ENCODE measurements at regions of chr12 and their contacts with region 1.

Region 1: DNA sequence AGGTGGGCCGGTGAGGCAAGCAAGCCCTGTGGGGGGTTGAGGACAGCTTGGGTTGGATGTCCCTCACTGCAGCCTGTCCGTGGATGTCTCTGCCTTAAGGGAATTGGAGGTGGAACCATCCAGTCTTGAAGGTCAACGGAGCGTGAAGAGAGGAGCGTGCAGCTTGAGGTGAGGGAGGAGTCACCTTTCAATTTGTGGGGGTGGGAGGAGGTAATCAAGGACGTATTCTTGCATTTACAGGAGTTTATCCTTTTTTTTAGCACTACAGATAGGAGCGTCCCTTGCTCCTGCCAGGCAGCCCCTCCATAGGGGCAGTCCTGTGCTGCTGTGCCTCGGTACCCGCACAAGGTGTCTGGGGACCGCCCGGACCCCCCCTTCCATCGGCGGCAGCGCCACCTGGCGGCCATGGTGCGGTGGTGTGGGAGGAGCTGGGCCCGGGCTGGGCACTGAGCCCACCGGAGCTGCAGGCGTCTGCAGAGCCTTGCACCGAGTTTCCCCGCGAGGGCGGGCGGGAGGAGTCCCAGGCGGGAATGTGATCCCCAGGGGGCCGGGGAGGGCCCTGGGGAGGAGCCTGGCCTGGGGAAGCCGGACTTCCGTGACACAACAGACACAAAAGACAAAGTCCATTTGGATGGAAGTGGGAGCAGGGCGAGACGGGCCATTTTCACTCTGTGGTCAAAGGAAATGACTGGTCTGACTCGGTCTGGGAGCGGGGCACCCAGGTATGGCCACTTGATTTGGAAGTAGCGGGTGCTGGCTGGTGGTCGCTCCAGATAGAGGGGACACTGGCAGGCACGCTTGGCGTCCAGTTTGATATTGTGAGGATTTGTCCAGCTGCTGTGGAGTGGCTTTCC is 923 bp downstream of the DNAJC22 start:
- DNase-seq: peak; percentile 75
- ATAC-seq: peak; percentile 59
- H3K4me3 Mint-ChIP-seq: peak overlapping the region; percentile 65
- H3K27ac Mint-ChIP-seq: no peak overlapping the region
- H3K4me1 Mint-ChIP-seq: peaks cover 38% of the 10 kb centered on the region
- H3K27me3 Mint-ChIP-seq: peaks cover 62% of the 10 kb centered on the region
- CTCF ChIP-seq: peak; percentile 100

Region 2: GRCh38 chr12:49288412-49288853 is 59.2 kb before region 1 on chr12:
- CTCF ChIA-PET with region 1: interaction called, 145 read pairs
- POLR2A ChIA-PET with region 1: interaction called, 8 read pairs
- intact Hi-C with region 1: loop called (anchors 2 kb)
- DNase-seq: peak; percentile 81
- ATAC-seq: peak; percentile 69
- H3K4me3 Mint-ChIP-seq: no peak overlapping the region
- H3K27ac Mint-ChIP-seq: no peak overlapping the region
- H3K4me1 Mint-ChIP-seq: no peaks in the 10 kb centered on the region
- H3K27me3 Mint-ChIP-seq: peaks cover 22% of the 10 kb centered on the region
- CTCF ChIP-seq: peak; percentile 95

Region 3: DNA sequence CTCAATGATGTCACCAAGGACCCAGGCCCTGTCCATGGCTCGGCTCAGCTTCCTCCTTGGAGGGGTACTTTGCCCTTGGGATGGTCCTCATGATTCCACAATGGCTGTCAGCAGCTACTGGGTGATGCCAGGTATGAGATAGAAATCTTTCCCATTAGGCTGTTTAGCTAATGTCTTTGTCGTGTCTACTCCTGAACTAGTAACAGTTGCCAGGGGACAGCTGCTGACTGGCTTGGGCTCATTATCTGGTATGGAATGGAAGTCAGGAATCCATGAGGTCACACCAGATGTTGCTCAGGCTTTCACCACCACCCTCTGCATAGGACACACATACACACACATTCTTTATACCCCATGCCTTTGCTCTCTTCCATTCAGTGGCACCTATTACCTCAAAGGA is 43.5 kb before region 1 on chr12:
- CTCF ChIA-PET with region 1: interaction called, 20 read pairs
- POLR2A ChIA-PET with region 1: no interaction called
- intact Hi-C with region 1: no loop called
- DNase-seq: no peak
- ATAC-seq: no peak
- H3K4me3 Mint-ChIP-seq: no peak overlapping the region
- H3K27ac Mint-ChIP-seq: no peak overlapping the region
- H3K4me1 Mint-ChIP-seq: no peaks in the 10 kb centered on the region
- H3K27me3 Mint-ChIP-seq: peaks cover 34% of the 10 kb centered on the region
- CTCF ChIP-seq: no peak

Region 4: DNA sequence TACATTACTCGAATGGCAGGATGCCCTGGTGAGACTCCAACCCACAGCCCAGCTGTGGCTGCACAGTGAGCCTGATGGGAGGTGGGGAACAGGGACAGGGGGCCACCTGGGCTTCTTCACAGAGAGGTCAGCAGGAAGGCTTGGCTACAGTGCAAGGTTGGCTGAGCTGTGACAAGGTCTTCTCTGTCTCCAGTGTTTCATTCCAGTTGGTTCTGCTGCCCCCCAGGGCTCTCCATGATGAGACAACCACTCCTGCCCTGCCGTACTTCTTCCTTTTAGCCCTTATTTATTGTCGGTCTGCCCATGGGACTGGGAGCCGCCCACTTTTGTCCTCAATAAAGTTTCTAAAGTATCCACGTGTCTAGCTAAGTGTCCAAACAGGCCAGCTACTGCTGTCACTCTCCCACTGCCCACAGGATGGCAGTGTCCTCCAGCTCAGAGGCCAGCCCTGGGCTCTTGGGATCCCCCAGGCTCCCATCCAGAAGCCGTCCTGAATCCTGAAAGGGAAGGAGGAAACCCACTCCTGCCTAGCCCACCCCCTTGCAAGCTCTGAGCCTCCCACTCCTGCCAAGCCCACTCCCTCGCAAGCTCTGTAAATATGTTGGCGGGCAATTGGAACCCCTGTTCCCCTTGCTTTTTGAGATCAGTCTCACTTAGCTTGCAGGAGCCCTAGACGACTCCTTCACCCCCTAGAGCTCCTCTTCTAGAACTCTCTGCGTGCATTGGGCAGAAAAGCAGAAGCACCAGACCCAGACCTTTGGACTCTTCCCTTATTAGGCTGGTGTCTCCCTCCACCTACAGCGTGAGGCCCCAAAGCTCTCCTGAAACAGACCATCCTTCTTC is 16.0 kb before region 1 on chr12:
- CTCF ChIA-PET with region 1: interaction called, 52 read pairs
- POLR2A ChIA-PET with region 1: interaction called, 11 read pairs
- intact Hi-C with region 1: no loop called
- DNase-seq: peak; percentile 36
- ATAC-seq: peak; percentile 58
- H3K4me3 Mint-ChIP-seq: no peak overlapping the region
- H3K27ac Mint-ChIP-seq: no peak overlapping the region
- H3K4me1 Mint-ChIP-seq: peaks cover 3% of the 10 kb centered on the region
- H3K27me3 Mint-ChIP-seq: peaks cover 36% of the 10 kb centered on the region
- CTCF ChIP-seq: peak; percentile 56

Region 5: DNA sequence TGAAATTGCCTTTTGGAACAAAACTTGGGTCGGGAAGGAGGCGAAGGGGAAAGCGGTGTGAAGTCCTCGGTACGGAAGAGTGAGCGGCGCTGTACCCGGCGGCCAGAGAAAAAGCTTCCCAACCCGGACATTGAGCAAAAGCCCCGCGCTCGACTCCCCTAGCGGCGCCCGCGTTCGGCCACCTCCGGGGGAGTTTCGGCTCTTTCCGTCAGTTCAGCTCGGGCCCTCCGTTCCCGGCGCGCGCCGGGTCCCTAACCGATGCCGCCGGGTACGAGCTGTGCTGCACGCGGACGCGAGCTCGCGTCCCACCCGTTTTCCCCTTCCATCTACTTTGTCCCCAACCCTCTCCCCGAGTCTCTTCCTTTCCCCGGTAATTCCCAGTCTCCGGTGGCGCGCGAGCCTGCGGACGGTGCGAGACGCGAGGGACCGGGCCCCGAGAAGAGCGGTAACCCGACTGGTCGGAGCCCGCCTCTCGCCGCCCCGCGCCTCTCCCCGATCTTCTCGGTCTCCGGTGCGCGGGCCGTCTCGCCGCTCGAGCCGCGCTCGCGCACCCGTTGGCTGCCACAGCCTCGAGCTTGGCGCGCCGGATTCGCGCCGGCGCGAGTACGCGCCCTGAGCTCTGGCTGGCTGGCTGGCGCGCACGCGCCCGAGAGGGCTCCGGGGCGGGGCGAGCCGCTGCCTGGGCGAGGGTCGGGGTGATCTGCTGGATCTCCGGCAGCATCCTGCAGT is 19.2 kb after region 1 on chr12:
- CTCF ChIA-PET with region 1: interaction called, 71 read pairs
- POLR2A ChIA-PET with region 1: interaction called, 13 read pairs
- intact Hi-C with region 1: no loop called
- DNase-seq: peak; percentile 92
- ATAC-seq: peak; percentile 86
- H3K4me3 Mint-ChIP-seq: peak overlapping the region; percentile 74
- H3K27ac Mint-ChIP-seq: peak overlapping the region; percentile 98
- H3K4me1 Mint-ChIP-seq: peaks cover 29% of the 10 kb centered on the region
- H3K27me3 Mint-ChIP-seq: no peaks in the 10 kb centered on the region
- CTCF ChIP-seq: no peak

Region 6: GRCh38 chr12:49503674-49504180 is 156.1 kb after region 1 on chr12:
- CTCF ChIA-PET with region 1: interaction called, 16 read pairs
- POLR2A ChIA-PET with region 1: no interaction called
- intact Hi-C with region 1: no loop called
- DNase-seq: no peak
- ATAC-seq: no peak
- H3K4me3 Mint-ChIP-seq: no peak overlapping the region
- H3K27ac Mint-ChIP-seq: no peak overlapping the region
- H3K4me1 Mint-ChIP-seq: peaks cover 12% of the 10 kb centered on the region
- H3K27me3 Mint-ChIP-seq: no peaks in the 10 kb centered on the region
- CTCF ChIP-seq: no peak

Region 7: DNA sequence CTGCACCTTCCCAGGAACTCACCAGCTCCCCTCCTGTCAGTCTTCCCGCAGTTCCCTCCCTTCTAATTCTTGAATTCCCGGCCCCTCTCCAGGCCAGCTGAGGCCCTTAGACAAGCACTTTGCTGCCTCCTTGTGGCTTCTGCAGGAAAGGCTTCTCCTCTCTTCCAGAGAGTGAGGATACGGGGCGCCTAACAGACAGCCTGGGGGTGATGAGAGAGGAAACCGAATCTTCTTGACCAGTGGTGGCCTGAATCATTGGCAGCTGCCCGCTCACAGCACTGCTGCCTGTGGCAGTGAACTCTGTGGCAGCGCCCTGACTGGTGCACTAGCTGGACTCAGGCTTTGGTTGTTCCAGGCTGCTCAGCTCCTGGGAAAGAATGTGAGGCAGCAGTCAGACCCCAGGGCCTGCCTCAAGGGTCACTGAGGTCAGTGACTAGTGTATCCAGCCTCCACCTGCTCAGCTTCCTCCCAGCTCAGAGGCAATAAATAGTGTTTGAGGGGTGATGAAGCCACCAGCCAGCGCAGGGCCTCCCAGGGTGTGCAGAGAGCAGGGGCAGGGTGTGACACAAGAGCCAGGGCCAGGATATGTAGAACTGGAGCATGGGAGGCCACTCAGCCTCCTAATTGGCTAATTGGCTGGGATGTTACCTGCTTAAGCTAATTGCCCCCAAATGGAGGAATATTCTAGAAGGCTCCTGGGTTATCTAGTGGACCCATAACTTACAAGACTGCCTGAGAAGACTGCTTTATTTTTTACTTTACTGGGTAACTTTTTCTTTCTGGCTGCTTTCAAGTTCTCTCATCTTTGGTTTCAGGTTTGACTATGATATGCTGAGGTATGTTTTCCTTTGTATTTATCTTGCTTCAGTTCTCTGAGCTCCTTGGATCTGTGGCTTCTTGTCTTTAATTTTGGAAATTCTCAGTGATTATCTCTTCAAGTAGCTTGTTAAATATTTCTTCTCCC is 233.2 kb after region 1 on chr12:
- CTCF ChIA-PET with region 1: interaction called, 11 read pairs
- POLR2A ChIA-PET with region 1: no interaction called
- intact Hi-C with region 1: no loop called
- DNase-seq: peak; percentile 76
- ATAC-seq: peak; percentile 90
- H3K4me3 Mint-ChIP-seq: no peak overlapping the region
- H3K27ac Mint-ChIP-seq: peak overlapping the region; percentile 7
- H3K4me1 Mint-ChIP-seq: peaks cover 15% of the 10 kb centered on the region
- H3K27me3 Mint-ChIP-seq: no peaks in the 10 kb centered on the region
- CTCF ChIP-seq: peak; percentile 77

Region 8: GRCh38 chr12:49855005-49855404 is 507.4 kb after region 1 on chr12:
- CTCF ChIA-PET with region 1: no interaction called
- POLR2A ChIA-PET with region 1: no interaction called
- intact Hi-C with region 1: no loop called
- DNase-seq: no peak
- ATAC-seq: no peak
- H3K4me3 Mint-ChIP-seq: no peak overlapping the region
- H3K27ac Mint-ChIP-seq: no peak overlapping the region
- H3K4me1 Mint-ChIP-seq: no peaks in the 10 kb centered on the region
- H3K27me3 Mint-ChIP-seq: peaks cover 3% of the 10 kb centered on the region
- CTCF ChIP-seq: no peak